Panc1 (cell line): ENCODE measurements at regions of chr12 and their contacts with region 1.

Region 1: GRCh38 chr12:52980693-52981423 is 25.4 kb upstream of the EIF4B start:
- DNase-seq: peak; percentile 94
- ATAC-seq: peak; percentile 89
- H3K4me3 ChIP-seq: no peak overlapping the region
- H3K27ac ChIP-seq: peak overlapping the region; percentile 53
- H3K4me1 ChIP-seq: peaks cover 25% of the 10 kb centered on the region
- H3K27me3 ChIP-seq: no peaks in the 10 kb centered on the region
- CTCF ChIP-seq: peak; percentile 98

Region 2: GRCh38 chr12:52879394-52880351 is 101.2 kb before region 1 on chr12:
- CTCF ChIA-PET with region 1: interaction called, 124 read pairs
- POLR2A ChIA-PET with region 1: interaction called, 5 read pairs
- in situ Hi-C with region 1: loop called (anchors 25 kb)
- intact Hi-C with region 1: no loop called
- DNase-seq: peak; percentile 77
- ATAC-seq: peak; percentile 92
- H3K4me3 ChIP-seq: peak overlapping the region; percentile 32 to 66
- H3K27ac ChIP-seq: peak overlapping the region; percentile 52; the same call in 1 of the 2 replicates
- H3K4me1 ChIP-seq: peaks cover 14% of the 10 kb centered on the region
- H3K27me3 ChIP-seq: no peaks in the 10 kb centered on the region
- CTCF ChIP-seq: peak; percentile 98

Region 3: GRCh38 chr12:52895061-52895887 is 85.6 kb before region 1 on chr12:
- CTCF ChIA-PET with region 1: interaction called, 18 read pairs
- POLR2A ChIA-PET with region 1: no interaction called
- in situ Hi-C with region 1: loop called (anchors 25 kb)
- intact Hi-C with region 1: no loop called
- DNase-seq: no peak
- ATAC-seq: peak; percentile 73
- H3K4me3 ChIP-seq: 0 out of 4 replicates have a peak overlapping the region, but pooled peaks of 1 of the 2 experiments have one; percentile 4
- H3K27ac ChIP-seq: peak overlapping the region; percentile 73
- H3K4me1 ChIP-seq: peaks cover 47% of the 10 kb centered on the region
- H3K27me3 ChIP-seq: no peaks in the 10 kb centered on the region
- CTCF ChIP-seq: no peak

Region 4: DNA sequence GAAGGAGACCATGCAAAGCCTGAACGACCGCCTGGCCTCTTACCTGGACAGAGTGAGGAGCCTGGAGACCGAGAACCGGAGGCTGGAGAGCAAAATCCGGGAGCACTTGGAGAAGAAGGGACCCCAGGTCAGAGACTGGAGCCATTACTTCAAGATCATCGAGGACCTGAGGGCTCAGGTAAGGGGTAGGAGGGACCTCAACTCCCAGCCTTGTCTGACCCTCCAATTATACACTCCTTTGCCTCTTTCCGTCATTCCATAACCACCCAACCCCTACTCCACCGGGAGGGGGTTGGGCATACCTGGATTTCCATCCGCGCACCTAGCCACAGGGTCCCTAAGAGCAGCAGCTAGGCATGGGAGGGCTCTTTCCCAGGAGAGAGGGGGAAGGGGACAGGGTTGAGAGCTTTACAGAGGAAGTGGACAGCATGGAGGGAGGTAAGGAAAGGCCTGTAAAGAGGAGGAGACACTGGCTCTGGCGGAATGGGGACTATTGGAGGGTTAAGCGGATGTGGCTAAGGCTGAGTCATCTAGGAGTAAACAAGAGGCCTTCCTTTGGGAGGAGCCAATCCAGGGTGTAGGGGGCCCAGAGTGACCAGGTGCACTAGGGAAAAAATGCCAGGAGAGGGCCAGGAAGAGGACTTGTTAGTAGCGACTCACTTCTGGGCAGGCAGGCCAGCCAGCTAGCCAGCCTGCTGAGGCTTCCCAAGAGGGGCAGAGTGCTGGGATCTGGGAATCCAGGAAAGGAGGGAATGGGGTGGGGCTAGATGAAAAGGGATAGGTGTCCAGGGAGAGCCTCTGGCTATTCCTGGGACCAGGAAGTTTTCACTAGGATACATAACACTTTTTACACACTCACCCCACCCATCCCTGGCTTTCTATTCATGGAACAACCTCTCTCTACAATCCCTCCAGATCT is 31.2 kb before region 1 on chr12:
- CTCF ChIA-PET with region 1: interaction called, 10 read pairs
- POLR2A ChIA-PET with region 1: interaction called, 10 read pairs
- in situ Hi-C with region 1: no loop called
- intact Hi-C with region 1: no loop called
- DNase-seq: peak; percentile 90
- ATAC-seq: peak; percentile 64
- H3K4me3 ChIP-seq: peak overlapping the region; percentile 81 to 100
- H3K27ac ChIP-seq: peak overlapping the region; percentile 98
- H3K4me1 ChIP-seq: peaks cover 55% of the 10 kb centered on the region
- H3K27me3 ChIP-seq: no peaks in the 10 kb centered on the region
- CTCF ChIP-seq: no peak

Region 5: DNA sequence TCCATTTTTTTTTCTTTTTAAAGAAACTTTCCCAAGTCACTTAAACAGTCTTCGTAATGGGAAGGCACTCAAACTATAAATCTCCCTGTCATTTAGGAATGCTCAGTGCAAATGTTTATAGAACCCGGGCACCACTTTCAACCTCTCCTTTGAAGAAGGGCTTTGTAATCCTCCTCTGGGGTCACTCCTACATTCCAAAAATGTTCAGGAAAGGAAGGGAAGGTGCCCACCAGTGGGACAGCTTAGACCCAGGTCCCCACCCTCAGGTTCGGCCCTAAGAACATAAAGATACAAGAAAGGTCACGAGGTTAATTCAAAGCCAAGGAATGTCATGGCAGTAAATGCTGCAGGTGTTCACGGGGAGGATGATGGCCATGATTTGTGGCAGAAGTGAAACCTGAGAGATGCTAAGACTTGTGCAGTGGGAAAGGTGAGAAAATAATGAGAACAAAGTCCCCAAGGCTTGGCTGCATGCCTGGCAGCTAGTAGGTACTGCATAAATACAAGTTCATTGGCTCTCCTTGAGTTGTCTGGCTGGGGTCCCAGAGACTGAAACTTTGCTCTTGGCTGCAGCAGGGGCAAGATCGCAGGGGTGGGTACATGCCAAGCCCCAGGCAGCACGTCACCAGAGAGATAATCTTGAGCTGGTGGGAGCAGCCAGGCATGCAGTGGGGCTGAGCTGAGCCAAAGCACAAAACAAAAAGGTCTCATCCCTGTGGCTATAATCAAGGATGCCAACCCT is 10.9 kb before region 1 on chr12:
- CTCF ChIA-PET with region 1: interaction called, 14 read pairs
- POLR2A ChIA-PET with region 1: no interaction called
- in situ Hi-C with region 1: no loop called
- intact Hi-C with region 1: no loop called
- DNase-seq: no peak
- ATAC-seq: peak; percentile 61
- H3K4me3 ChIP-seq: no peak overlapping the region
- H3K27ac ChIP-seq: peak overlapping the region; percentile 95
- H3K4me1 ChIP-seq: peaks cover 53% of the 10 kb centered on the region
- H3K27me3 ChIP-seq: no peaks in the 10 kb centered on the region
- CTCF ChIP-seq: no peak